Activated CD4-positive, alpha-beta memory T cell treated with anti-CD3 and anti-CD28 coated beads for 36 hours (primary cell): ENCODE measurements at regions of chr7 and their contacts with region 1.

Region 1: DNA sequence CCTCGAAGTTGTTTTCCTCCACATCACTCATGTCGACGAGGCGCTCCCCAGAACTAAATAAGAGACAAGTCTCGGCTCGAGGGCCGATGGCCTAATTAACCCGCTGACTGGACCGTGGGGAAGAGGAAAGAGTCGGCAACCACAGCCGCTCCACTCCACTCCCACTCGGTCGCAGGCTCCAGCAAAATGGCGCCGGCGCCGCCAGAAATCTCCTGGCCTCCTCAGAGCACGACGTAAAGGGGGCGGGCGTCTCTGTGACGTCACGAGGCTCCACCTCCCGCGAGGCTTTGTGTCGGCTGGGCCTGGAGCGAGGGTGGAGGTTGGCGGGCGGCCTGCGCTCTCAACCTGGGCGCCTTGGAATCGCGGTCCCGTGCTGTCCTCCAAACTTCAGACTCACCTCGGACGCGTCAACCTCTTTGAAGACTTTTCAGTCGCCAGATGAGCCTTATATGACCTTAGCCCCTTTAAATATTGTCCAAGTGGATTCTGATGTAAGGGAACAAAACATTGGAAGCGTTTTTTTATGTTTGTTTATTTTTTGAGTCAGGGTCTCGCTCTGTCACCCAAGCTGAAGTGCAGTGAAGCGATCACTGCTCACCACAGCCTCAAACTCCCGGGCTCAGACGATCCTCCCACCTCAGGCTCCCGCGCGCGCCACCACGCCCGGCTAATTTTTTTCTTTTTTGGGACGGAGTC is at the start of gene TRA2A:
- DNase-seq: peak; percentile 98
- H3K4me3 Mint-ChIP-seq: peak within 1 kb of the TSS; percentile 100
- H3K27ac Mint-ChIP-seq: peak within 1 kb of the TSS; percentile 100
- H3K4me1 Mint-ChIP-seq: peaks cover 38% of the 10 kb centered on the region
- H3K27me3 Mint-ChIP-seq: no peaks in the 10 kb centered on the region
- total RNA-seq, gene TRA2A: 75.4 to 77.8 TPM

Region 2: GRCh38 chr7:23105644-23106056 is 426.3 kb before region 1 on chr7 and contains the start of gene KLHL7:
- CTCF ChIA-PET with region 1: no interaction called
- POLR2A ChIA-PET with region 1: no interaction called
- intact Hi-C with region 1: loop called (anchors 5 kb)
- DNase-seq: peak; percentile 97
- H3K4me3 Mint-ChIP-seq: peak within 1 kb of the TSS; percentile 98
- H3K27ac Mint-ChIP-seq: peak within 1 kb of the TSS; percentile 88
- H3K4me1 Mint-ChIP-seq: peaks cover 41% of the 10 kb centered on the region
- H3K27me3 Mint-ChIP-seq: no peaks in the 10 kb centered on the region
- total RNA-seq, gene KLHL7: 24.3 to 24.8 TPM

Region 3: DNA sequence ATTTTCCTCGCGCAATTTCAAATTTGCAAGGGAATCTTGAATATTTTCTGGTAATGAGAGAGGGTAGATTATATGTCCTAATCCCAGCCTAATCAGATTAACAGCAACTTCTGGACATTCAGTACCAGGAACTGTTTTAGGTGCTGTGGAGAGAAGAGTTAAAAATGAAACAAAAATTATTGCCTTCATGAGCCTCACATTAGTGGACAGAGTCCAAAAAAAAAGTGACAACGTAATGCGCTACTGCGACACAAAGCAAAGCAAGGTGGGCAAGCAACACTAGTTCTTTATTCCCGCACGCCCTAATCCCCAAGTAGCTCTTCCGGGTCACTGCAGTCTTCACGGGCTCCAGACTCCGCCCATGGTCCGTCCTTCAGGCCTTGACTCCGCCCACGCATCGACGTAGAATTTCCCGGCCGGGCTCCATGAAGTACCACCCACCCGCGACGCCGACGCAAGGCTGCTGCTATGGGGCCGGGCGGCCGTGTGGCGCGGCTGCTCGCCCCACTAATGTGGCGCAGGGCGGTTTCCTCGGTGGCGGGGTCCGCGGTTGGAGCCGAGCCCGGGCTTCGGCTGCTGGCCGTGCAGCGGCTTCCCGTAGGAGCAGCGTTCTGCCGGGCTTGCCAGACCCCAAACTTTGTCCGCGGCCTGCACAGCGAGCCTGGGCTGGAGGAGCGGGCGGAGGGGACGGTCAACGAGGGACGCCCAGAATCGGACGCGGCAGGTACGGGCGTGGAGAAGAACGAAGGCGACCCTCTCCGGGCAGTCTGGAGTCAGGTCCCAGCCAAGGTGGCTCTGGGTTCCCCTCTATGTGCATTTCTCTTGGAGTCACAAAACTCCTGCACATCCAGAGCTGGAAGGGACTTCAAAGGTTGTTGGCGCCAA is 232.8 kb before region 1 on chr7 and contains the start of gene MALSU1:
- CTCF ChIA-PET with region 1: no interaction called
- POLR2A ChIA-PET with region 1: no interaction called
- intact Hi-C with region 1: loop called (anchors 1 kb)
- DNase-seq: peak; percentile 98
- H3K4me3 Mint-ChIP-seq: peak within 1 kb of the TSS; percentile 96
- H3K27ac Mint-ChIP-seq: peak within 1 kb of the TSS; percentile 97
- H3K4me1 Mint-ChIP-seq: peaks cover 36% of the 10 kb centered on the region
- H3K27me3 Mint-ChIP-seq: peaks cover 3% of the 10 kb centered on the region
- total RNA-seq, gene MALSU1: 100 to 101 TPM

Region 4: DNA sequence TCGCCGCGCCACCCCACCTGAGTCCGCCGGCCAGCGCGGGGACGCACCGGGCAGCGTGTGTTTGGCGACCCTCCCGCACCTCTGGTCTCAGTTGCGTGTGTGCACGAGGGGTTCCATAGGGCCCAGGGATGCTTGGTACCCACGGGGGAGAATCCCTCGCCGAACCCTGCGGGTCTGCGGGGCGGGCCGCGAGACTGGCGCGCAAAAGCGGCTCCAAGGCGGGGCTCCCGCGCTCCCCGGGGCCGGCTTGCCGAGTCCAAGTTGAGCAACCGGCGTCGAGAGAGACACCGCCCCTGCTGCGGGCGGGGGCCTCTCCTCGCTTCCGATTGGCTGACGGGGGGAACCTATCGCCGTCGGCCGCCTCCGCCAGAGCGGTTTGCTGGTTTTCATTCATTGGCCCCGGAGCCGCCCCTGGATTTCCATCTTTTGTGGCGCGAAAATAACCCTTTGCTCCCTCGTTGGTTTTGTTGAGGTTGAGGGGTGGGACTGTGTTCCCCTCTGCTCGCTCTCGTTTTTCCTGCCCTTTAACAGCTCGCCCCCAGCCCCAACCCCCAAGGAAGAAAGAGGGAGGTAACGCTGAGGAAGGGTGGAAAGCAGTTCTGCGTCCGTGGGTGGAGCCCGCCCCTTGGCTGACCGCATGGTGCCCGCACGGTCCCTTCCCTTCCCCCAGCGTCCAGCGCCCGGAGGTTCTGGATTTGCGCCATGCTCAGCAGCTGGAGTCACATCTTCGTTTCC is 57.7 kb before region 1 on chr7:
- CTCF ChIA-PET with region 1: no interaction called
- POLR2A ChIA-PET with region 1: interaction called, 3 read pairs
- intact Hi-C with region 1: loop called (anchors 2 kb)
- DNase-seq: peak; percentile 91
- H3K4me3 Mint-ChIP-seq: peak overlapping the region; percentile 63
- H3K27ac Mint-ChIP-seq: peak overlapping the region; percentile 42
- H3K4me1 Mint-ChIP-seq: peaks cover 27% of the 10 kb centered on the region
- H3K27me3 Mint-ChIP-seq: peaks cover 60% of the 10 kb centered on the region

Region 5: GRCh38 chr7:23514755-23515154 is 17.2 kb before region 1 on chr7:
- CTCF ChIA-PET with region 1: interaction called, 3 read pairs
- POLR2A ChIA-PET with region 1: no interaction called
- intact Hi-C with region 1: loop called (anchors 2 kb)
- DNase-seq: peak; percentile 31
- H3K4me3 Mint-ChIP-seq: no peak overlapping the region
- H3K27ac Mint-ChIP-seq: peak overlapping the region; percentile 71
- H3K4me1 Mint-ChIP-seq: peaks cover 19% of the 10 kb centered on the region
- H3K27me3 Mint-ChIP-seq: no peaks in the 10 kb centered on the region

Region 6: DNA sequence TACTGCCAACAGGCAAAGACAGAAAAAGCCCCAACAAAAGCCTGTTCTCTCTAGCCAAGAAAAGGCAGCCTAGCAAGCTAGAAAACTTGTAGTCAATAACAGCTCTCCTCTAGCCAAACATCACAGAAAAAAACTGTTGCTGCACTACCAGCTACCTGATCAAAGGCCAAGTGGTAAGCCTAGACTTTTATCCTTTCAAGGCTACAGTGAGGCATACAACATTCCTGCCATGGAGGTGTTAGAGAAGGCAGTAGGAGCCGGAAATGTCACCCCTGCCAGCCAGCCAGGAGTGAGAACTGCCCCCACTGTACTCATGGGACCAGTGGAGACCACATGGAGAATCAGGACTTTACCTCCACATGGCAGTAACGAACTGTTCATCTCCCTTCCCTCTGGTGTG is 96.4 kb after region 1 on chr7:
- CTCF ChIA-PET with region 1: no interaction called
- POLR2A ChIA-PET with region 1: no interaction called
- intact Hi-C with region 1: no loop called
- DNase-seq: no peak
- H3K4me3 Mint-ChIP-seq: no peak overlapping the region
- H3K27ac Mint-ChIP-seq: no peak overlapping the region
- H3K4me1 Mint-ChIP-seq: no peaks in the 10 kb centered on the region
- H3K27me3 Mint-ChIP-seq: no peaks in the 10 kb centered on the region

Region 7: GRCh38 chr7:23672033-23672432 is 140.1 kb after region 1 on chr7:
- CTCF ChIA-PET with region 1: no interaction called
- POLR2A ChIA-PET with region 1: no interaction called
- intact Hi-C with region 1: no loop called
- DNase-seq: no peak
- H3K4me3 Mint-ChIP-seq: no peak overlapping the region
- H3K27ac Mint-ChIP-seq: no peak overlapping the region
- H3K4me1 Mint-ChIP-seq: no peaks in the 10 kb centered on the region
- H3K27me3 Mint-ChIP-seq: peaks cover 16% of the 10 kb centered on the region

Region 8: DNA sequence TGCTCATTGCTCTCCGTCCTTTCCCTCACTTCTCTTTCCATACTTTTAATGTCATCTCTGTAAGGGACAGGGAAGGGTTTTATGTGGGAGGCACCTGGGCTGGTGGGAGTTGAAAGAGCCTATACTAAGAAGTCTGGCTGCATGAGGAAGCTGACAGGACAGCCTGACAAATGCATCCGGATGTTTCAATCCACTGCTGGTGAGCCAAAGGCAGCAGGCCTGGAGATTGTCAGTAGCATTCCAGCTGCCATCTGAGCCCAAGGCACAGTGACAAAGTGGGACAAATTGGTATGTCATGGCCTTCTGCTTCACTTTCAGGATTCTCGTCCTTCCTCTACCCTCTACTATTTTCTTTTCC is 396.5 kb after region 1 on chr7:
- CTCF ChIA-PET with region 1: no interaction called
- POLR2A ChIA-PET with region 1: no interaction called
- intact Hi-C with region 1: no loop called
- DNase-seq: no peak
- H3K4me3 Mint-ChIP-seq: no peak overlapping the region
- H3K27ac Mint-ChIP-seq: no peak overlapping the region
- H3K4me1 Mint-ChIP-seq: no peaks in the 10 kb centered on the region
- H3K27me3 Mint-ChIP-seq: no peaks in the 10 kb centered on the region